ENCODE measurements at regions of chr1 and their contacts with region 1.

Region 1: GRCh38 chr1:164765557-164765956 is 206.6 kb downstream of the PBX1 start:
- DNase-seq: peak; percentile 88
- H3K4me3 ChIP-seq: no peak overlapping the region
- H3K27me3 ChIP-seq: no peaks in the 10 kb centered on the region
- CTCF ChIP-seq: no peak

Region 2: DNA sequence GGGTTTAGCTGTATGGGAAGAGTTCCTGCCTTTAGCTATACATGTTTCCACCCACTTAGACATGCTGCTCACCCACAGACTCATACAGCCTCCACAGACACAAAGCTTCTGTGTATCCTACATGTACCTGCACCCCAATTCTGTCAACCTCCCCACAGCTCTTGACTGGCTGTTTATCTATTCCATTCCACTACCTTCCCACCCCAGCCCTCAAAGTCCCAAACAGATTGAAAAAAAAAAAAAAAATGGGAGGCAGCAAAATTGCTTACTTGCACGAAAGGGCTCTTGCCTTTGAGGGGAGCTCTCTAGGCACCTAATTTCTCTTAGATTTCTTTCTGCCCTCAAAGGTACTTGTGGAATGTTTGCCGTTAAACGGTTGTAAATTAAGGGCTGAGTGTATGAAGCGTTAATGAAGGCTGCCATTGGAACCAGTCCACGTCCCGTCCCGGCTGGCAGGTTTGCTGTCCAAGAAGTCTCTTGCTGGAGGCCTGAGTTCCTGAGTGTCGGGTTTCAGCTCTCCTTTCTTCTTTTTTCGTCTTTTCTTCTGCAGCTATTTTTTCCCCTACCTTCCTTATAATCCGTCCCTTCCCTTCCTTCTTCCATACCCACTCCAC is 163.0 kb before region 1 on chr1:
- CTCF ChIA-PET with region 1: no interaction called
- POLR2A ChIA-PET with region 1: interaction called, 12 read pairs
- DNase-seq: peak; percentile 47
- H3K4me3 ChIP-seq: no peak overlapping the region
- H3K27me3 ChIP-seq: no peaks in the 10 kb centered on the region
- CTCF ChIP-seq: no peak

Region 3: DNA sequence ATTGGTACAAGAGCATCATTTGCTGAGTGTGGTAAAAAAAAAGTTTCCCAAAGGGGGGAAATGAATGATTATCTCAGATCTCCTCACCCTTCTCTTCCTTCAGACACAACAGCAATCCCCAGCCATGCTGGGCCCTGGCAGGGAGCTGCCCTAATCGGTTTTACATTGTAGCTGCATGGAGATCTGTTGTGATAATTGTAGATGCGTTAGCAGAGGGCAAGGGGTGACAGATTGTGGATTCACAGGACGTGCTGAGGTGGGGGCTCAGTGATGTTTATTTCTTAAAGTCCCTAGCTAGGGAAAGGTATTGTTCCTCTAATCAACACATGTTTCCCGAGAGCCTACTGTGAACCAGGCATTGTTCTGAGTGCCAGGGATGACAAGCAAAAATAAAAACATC is 97.5 kb after region 1 on chr1:
- CTCF ChIA-PET with region 1: no interaction called
- POLR2A ChIA-PET with region 1: no interaction called
- DNase-seq: no peak
- H3K4me3 ChIP-seq: no peak overlapping the region
- H3K27me3 ChIP-seq: no peaks in the 10 kb centered on the region
- CTCF ChIP-seq: no peak

Region 4: DNA sequence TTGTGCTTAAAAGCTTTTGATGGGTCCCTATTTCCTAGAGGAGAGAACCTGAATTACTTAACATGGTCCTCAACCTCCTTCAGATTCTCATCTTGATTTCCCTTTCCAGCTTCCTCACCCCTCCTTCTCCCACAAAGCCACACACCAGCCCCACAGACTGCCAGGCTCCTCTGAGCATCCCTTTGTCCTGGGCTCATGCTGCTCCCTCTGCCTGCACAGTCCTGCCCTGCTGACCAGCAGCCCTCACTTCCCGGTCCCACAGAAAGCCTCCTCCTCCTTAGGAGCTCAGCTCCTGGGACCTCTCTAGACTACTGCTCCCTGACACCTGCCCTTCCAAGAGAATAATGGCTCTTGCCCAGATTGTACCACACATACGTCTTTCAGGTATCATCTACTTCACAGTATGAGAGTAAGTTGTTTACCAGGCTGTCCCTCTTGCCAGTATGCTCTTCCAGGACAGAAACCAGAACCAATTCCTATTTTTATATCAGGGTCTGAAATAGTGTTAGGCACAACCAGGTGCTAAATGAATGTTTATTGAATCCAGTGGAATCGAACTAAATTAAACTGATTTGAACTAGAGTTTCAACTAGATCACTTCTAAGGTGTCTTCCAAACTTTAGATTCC is 217.6 kb after region 1 on chr1:
- CTCF ChIA-PET with region 1: no interaction called
- POLR2A ChIA-PET with region 1: no interaction called
- DNase-seq: no peak
- H3K4me3 ChIP-seq: no peak overlapping the region
- H3K27me3 ChIP-seq: no peaks in the 10 kb centered on the region
- CTCF ChIP-seq: no peak